ENCODE measurements at regions of chr3 and their contacts with region 1.

Region 1: GRCh38 chr3:184371570-184372018 is 6.4 kb downstream of the THPO start:
- DNase-seq: peak; percentile 59
- H3K4me3 ChIP-seq: no peak overlapping the region
- CTCF ChIP-seq: peak; percentile 99

Region 2: DNA sequence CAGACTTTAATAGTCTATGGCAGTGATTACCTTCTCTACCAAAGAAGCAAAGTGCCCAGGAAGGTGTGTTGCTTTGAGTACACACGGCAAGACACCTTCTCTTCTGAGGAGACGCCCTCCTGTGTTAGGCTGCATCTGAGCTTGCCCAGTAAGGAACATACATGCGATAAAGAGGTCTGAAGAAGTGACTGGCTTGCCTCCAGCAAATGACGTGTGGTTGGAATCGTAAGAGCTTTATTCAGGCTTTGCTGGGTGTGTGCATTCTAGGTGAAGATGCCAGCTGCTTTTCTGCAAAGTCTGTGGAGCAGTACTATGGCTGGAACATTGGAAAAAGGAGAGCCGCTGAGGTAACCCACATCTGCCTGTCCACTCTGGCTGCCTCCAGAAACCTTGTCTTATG is 568.6 kb before region 1 on chr3:
- CTCF ChIA-PET with region 1: no interaction called
- POLR2A ChIA-PET with region 1: no interaction called
- DNase-seq: no peak
- H3K4me3 ChIP-seq: no peak overlapping the region
- CTCF ChIP-seq: no peak

Region 3: DNA sequence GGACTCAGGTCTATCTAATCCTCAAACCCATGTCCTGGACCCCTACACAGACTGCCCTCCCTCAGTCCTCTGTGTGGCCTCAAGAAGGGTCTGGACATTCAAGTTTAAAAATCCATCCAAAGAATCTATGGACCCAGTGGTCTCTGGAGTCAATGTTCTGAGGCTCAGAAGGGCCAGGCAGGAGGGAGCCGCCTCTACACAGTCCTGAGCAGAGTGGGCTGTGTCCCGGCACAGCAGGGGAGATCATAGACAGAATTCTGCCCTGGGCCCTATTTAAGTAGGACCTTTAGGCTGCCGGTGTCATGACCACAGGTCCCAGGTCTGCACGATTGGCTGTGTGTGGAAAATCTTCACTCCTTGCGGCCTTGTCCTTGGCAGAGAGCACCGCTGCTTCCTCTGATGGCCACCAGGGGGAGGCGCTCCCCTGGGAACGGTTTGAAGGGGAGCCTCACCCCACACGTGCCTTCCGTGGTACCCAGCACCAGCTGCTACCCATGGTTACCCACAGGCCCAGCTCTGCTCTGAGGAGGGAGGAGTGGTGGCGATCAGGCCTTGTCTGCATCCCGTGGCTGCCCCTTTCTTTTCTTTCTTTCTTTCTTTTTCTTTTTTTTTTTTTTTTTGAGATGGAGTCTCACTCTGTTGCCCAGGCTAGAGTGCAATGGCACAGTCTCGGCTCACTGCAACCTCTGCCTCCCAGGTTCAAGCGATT is 46.2 kb after region 1 on chr3:
- CTCF ChIA-PET with region 1: interaction called, 18 read pairs
- POLR2A ChIA-PET with region 1: no interaction called
- DNase-seq: no peak
- H3K4me3 ChIP-seq: no peak overlapping the region
- CTCF ChIP-seq: peak; percentile 99

Region 4: DNA sequence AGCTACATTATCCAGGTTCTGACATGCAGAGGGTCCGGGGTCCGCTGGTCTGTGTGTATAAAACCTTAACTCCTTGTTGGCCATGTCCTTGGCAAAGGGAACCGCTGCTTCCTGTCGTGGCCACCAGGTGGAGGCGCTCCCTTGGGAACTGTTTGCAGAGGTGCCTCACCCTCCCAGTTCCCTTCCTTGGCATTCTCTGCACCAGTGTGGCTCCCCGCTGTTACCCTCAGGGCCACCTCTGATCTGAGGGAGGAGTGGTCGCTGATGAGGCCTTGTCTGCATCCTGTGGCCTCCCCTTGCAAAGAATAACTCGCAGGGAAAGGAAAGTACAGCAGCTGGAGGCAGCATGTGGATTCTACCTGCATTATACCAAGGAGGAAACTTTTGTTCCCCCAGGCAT is 97.8 kb after region 1 on chr3:
- CTCF ChIA-PET with region 1: interaction called, 81 read pairs
- POLR2A ChIA-PET with region 1: no interaction called
- DNase-seq: no peak
- H3K4me3 ChIP-seq: no peak overlapping the region
- CTCF ChIP-seq: peak; percentile 58

Region 5: DNA sequence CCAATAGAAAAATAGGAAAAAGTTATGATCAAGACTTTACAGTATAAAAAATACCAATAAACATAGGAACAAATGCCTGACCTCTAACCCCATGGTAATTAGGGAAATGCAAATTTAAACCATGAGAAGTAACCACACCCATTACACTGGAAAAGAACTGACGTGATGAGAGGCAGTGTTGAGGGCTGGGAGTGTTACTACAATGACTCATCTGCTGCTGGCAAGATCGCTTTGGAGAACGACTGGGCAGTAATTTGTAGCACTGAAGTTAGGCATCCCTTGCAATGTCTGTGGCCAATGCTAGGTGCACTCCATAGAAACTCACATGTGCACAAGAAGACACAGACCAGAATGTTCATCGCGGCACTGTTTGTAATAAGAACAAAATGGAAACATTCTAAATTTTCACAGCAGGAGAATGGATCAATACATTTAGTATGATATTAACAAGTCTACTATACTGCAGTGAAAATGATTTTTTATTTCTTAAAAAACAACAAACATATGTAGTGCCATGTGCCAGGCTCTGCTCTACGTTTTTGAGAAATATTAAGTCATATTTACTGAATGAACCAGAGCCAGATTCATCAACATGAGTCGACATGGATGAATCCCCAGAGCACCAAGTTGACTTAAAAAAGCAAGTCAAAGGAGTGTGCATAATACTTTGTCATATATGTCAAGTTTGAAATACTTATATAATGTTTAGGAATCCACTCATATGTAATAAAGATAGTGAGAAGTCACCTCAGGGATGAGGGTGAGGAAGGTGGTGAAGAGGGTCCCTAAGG is 152.4 kb after region 1 on chr3:
- CTCF ChIA-PET with region 1: interaction called, 359 read pairs
- POLR2A ChIA-PET with region 1: interaction called, 3 read pairs
- DNase-seq: no peak
- H3K4me3 ChIP-seq: no peak overlapping the region
- CTCF ChIP-seq: no peak

Region 6: DNA sequence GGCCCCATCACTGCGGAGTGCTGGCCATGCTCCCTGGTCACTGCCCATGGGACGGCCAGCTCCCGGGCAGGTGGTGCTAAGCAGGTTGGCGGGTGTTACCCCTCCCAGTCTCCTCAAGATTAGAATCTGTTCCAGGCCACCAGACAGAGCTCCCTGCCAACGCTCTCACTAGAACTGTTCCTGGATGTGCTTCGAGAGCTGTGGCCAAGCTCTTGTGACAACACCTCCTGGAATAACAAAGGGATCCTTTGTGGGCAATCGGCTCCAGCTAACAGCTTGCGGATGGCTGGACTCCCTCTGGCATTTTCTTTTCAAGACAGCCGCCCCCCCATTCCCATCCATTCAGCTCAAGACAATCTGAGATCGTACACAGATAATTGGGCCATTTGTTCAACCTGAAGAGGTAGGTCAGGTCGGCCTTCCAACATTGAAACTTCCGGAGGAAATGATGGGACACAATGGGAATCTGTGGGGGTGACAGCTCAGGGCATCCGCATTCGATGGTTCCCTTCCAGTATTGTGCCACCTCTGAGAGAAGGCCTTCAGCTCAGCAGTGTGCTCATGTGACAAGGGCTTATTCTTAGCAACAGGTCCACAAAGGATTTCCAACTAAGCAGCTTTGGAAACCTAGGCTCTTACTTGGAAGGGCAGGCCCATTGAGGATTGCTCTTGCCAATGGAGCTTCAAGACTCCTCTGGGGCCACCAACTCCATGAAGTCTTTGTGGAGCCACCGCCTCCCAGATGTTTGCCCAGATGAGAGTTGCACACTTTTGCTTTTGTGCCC is 178.4 kb after region 1 on chr3:
- CTCF ChIA-PET with region 1: interaction called, 469 read pairs
- POLR2A ChIA-PET with region 1: no interaction called
- DNase-seq: no peak
- H3K4me3 ChIP-seq: no peak overlapping the region
- CTCF ChIP-seq: no peak

Region 7: GRCh38 chr3:184805351-184806038 is 433.9 kb after region 1 on chr3:
- CTCF ChIA-PET with region 1: interaction called, 11 read pairs
- POLR2A ChIA-PET with region 1: no interaction called
- DNase-seq: no peak
- H3K4me3 ChIP-seq: no peak overlapping the region
- CTCF ChIP-seq: no peak

Measured in AG04449 (cell line).